SK-N-SH (cell line): ENCODE measurements at regions of chr2 and their contacts with region 1.

Region 1: DNA sequence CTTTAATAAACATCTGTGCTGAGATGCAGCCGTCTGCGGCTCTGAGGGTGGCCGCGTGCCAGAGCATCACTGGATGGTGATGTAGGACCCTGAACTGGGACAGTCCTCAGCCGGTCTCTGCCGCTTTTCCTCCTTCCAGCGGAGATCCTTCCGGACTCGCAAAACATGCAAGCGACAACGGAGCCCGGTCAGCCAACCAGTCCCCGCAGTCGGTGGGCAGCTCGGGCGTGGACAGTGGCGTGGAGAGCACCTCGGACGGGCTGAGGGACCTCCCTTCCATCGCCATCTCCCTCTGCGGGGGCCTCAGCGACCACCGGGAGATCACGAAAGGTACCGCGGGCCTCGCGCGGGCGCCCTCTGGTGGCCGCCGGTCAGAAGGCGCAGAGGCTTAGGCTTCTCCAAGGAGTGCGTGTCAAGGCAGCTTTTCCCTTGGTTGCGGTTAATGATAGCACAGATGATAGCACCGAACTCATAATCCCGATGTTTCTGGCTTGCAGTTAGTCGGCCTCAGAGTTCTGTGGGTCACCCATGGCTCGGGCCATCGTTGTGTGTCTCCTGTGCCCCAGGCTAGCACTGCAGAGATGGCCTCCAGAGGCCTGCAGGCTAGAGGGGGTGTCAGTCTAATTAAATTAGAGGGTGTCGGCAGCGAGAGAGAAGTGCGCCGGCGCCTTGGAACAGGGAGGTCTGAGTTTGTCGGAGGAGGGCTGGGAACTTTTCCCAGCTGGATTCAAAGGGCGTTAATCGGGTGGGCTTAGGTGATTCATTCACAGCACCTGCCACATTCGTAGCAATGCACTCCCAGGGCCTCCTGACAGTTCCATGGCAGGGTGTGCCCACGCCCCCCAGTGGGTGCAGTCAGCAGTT is 38.5 kb downstream of the LPIN1 start:
- DNase-seq: peak; percentile 91
- H3K4me3 ChIP-seq: no peak overlapping the region; a peak in 1 of 4 replicates
- H3K27ac ChIP-seq: no peak overlapping the region
- H3K4me1 ChIP-seq: peaks cover 0 to 9% of the 10 kb centered on the region in 2 experiments; a peak in 1 of 4 replicates
- H3K27me3 ChIP-seq: no peaks in the 10 kb centered on the region
- CTCF ChIP-seq: peak; percentile 90
- EP300 ChIP-seq: no peak
- RAD21 ChIP-seq: peak; percentile 63

Region 2: GRCh38 chr2:11357428-11357972 is 427.5 kb before region 1 on chr2:
- CTCF ChIA-PET with region 1: no interaction called
- POLR2A ChIA-PET with region 1: no interaction called
- DNase-seq: no peak
- H3K4me3 ChIP-seq: no peak overlapping the region
- H3K27ac ChIP-seq: no peak overlapping the region
- H3K4me1 ChIP-seq: no peaks in the 10 kb centered on the region
- H3K27me3 ChIP-seq: no peaks in the 10 kb centered on the region; the same call in 1 of the 2 replicates
- CTCF ChIP-seq: no peak
- EP300 ChIP-seq: no peak
- RAD21 ChIP-seq: no peak

Region 3: DNA sequence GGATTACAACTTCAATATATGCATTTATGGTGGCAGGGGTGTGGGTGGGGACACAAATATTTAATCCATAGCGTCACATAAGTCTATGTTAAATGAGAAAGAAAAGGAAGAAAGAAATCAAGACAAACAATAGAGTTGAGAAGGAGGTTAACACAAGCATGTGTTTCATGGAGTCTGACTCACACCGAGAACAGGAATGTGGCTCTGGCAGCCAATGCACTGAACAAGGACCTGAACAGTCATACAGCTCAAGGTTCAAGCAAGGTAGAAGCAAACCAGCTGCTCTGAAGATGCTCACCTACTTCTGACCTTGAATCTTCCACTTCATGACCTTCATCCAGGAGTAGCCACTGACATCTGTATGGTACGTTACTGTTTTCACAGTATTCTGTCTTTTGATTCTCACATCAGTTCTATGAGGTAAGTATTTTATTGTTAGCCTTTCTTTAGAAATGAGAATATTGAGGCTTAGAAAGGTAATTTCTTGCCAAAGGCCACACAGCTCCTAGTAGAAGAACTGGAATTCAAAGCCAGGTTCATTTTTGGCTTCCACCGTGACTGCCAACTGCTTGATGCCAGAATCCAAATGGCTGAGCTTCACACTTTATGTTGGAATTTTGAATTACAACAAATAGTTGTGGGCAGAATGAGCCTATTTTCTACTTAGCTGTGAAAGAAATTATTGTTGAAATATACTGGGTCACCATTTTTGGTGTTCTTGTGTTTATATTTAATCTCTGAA is 74.6 kb before region 1 on chr2:
- CTCF ChIA-PET with region 1: interaction called, 11 read pairs
- POLR2A ChIA-PET with region 1: no interaction called
- DNase-seq: no peak
- H3K4me3 ChIP-seq: no peak overlapping the region
- H3K27ac ChIP-seq: peak overlapping the region; percentile 13 to 40; a peak in 3 of 4 replicates
- H3K4me1 ChIP-seq: peaks cover 9 to 18% of the 10 kb centered on the region in 2 experiments; a peak in 3 of 4 replicates
- H3K27me3 ChIP-seq: no peaks in the 10 kb centered on the region
- CTCF ChIP-seq: no peak
- EP300 ChIP-seq: no peak
- RAD21 ChIP-seq: no peak

Region 4: GRCh38 chr2:11753886-11754699 is 30.9 kb before region 1 on chr2:
- CTCF ChIA-PET with region 1: interaction called, 454 read pairs
- POLR2A ChIA-PET with region 1: interaction called, 3 read pairs
- DNase-seq: peak; percentile 77
- H3K4me3 ChIP-seq: no peak overlapping the region
- H3K27ac ChIP-seq: peak overlapping the region in 1 of 2 experiments; percentile 73; a peak in 2 of 4 replicates
- H3K4me1 ChIP-seq: peaks cover 23 to 45% of the 10 kb centered on the region in 2 experiments
- H3K27me3 ChIP-seq: no peaks in the 10 kb centered on the region
- CTCF ChIP-seq: no peak
- EP300 ChIP-seq: peak in 1 of 2 experiments; percentile 67; a peak in 1 of 4 replicates
- RAD21 ChIP-seq: no peak

Region 5: DNA sequence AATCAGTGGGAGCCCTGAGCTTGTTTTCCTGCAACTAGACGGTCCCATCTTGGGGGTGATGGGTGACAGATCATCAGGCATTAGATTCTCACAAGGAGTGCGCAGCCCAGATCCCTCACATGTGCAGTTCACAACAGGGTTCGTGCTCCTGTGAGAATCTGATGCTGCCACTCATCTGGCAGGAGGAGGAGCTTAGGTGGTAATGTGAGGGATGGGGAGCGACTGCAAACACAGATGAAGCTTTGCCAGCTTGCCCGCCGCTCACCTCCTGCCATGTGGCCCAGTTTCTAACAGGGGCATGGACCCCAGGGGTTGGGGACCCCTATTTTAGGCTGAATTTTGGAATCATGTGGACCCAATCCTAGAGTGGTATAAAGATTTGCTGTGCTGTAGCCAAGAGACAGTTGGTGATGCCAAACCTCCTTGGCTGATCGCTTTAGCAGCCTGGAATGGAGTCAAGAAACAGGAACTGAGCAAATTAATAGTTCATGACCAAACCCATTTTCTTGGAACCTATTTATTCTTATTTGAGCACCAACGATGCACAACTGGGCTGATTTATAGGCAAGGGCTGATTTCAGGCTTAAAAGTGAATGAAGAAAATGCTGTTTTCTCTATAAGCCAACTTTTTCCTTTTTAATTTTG is 12.9 kb before region 1 on chr2:
- CTCF ChIA-PET with region 1: interaction called, 80 read pairs
- POLR2A ChIA-PET with region 1: no interaction called
- DNase-seq: no peak
- H3K4me3 ChIP-seq: no peak overlapping the region
- H3K27ac ChIP-seq: no peak overlapping the region
- H3K4me1 ChIP-seq: peaks cover 6 to 24% of the 10 kb centered on the region in 2 experiments; a peak in 2 of 4 replicates
- H3K27me3 ChIP-seq: no peaks in the 10 kb centered on the region
- CTCF ChIP-seq: no peak
- EP300 ChIP-seq: no peak
- RAD21 ChIP-seq: no peak

Region 6: GRCh38 chr2:11802782-11803191 is 17.8 kb after region 1 on chr2:
- CTCF ChIA-PET with region 1: interaction called, 48 read pairs
- POLR2A ChIA-PET with region 1: no interaction called
- DNase-seq: no peak
- H3K4me3 ChIP-seq: no peak overlapping the region
- H3K27ac ChIP-seq: peak overlapping the region in 1 of 2 experiments; percentile 8; a peak in 2 of 4 replicates
- H3K4me1 ChIP-seq: peaks cover 6 to 8% of the 10 kb centered on the region in 2 experiments; a peak in 1 of 4 replicates
- H3K27me3 ChIP-seq: no peaks in the 10 kb centered on the region
- CTCF ChIP-seq: no peak
- EP300 ChIP-seq: no peak
- RAD21 ChIP-seq: no peak

Region 7: GRCh38 chr2:11930211-11930761 is 145.3 kb after region 1 on chr2:
- CTCF ChIA-PET with region 1: no interaction called
- POLR2A ChIA-PET with region 1: no interaction called
- DNase-seq: peak; percentile 32
- H3K4me3 ChIP-seq: no peak overlapping the region
- H3K27ac ChIP-seq: no peak overlapping the region
- H3K4me1 ChIP-seq: peaks cover 0 to 6% of the 10 kb centered on the region in 2 experiments; a peak in 1 of 4 replicates
- H3K27me3 ChIP-seq: no peaks in the 10 kb centered on the region
- CTCF ChIP-seq: no peak
- EP300 ChIP-seq: no peak
- RAD21 ChIP-seq: no peak